ENCODE measurements at regions of chr7 and their contacts with region 1.

Region 1: GRCh38 chr7:44980393-44981034 is 1.7 kb upstream of the MYO1G start:
- DNase-seq: peak; percentile 95
- H3K4me3 Mint-ChIP-seq: peak overlapping the region; percentile 99
- H3K27ac Mint-ChIP-seq: peak overlapping the region; percentile 99
- H3K4me1 Mint-ChIP-seq: peaks cover 58% of the 10 kb centered on the region
- H3K27me3 Mint-ChIP-seq: no peaks in the 10 kb centered on the region

Region 2: GRCh38 chr7:44257618-44258422 is 722.7 kb before region 1 on chr7:
- CTCF ChIA-PET with region 1: no interaction called
- intact Hi-C with region 1: loop called (anchors 5 kb)
- DNase-seq: peak; percentile 90
- H3K4me3 Mint-ChIP-seq: peak overlapping the region; percentile 17
- H3K27ac Mint-ChIP-seq: peak overlapping the region; percentile 94
- H3K4me1 Mint-ChIP-seq: peaks cover 29% of the 10 kb centered on the region
- H3K27me3 Mint-ChIP-seq: no peaks in the 10 kb centered on the region

Region 3: DNA sequence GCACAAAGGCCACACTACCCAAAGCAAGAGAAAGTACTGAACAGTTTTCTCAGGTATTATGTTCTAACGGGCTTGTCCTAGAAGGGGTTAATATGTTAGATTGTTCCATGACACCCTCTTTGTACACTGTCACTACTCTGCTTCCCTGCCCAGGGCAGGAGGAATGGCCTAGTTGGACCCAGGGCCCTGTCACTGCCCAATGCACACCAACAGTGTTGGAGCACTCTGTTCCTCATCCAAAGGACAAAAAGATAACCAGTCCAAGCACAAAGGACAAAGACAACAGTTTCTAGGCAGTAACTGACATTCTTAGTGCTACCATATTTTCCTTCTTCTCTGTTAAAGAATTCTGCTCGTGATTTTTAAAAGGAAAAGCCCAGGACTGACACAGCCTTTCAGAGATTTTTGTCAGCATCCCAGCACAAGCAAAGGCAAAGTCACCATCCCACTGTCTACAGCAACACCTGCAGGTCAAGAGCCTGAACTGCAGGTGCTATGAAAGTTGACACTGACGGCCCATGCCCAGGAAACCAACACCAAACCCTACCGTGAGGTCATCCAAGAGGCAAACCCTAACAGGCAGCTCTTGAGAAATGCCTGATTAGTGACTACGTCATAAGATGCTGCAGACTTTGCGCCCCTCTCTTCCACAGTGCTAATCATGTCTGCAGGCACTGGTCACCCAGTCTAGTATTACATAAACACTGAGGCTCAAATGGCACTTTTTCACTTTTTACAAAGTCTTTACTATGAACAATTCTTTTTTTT is 503.3 kb before region 1 on chr7:
- CTCF ChIA-PET with region 1: no interaction called
- intact Hi-C with region 1: no loop called
- DNase-seq: peak; percentile 70
- H3K4me3 Mint-ChIP-seq: no peak overlapping the region
- H3K27ac Mint-ChIP-seq: no peak overlapping the region
- H3K4me1 Mint-ChIP-seq: peaks cover 33% of the 10 kb centered on the region
- H3K27me3 Mint-ChIP-seq: no peaks in the 10 kb centered on the region

Region 4: DNA sequence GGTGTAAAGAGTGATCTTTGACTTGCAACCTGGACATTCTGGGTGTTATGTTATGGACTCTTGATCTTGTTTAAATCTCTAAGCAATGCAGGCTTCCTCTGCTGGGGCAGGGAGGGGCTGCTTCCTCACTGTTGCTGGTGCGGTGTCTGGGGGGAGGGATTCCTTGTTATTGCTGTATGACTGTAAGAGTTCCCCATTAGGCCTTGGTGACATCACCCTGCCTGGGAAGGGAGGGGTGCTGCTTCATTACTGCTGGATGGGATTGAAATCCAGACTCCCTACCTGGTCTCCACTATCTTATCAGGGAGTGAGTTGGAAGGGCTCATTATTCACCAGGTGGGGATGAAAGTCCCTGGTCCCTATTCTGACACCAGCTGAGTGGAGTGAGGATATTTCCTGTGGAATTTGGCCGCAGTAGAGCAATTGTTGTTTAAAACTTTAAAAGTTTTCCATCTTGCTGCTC is 365.3 kb before region 1 on chr7:
- CTCF ChIA-PET with region 1: no interaction called
- intact Hi-C with region 1: loop called (anchors 1 kb)
- DNase-seq: peak; percentile 57
- H3K4me3 Mint-ChIP-seq: no peak overlapping the region
- H3K27ac Mint-ChIP-seq: peak overlapping the region; percentile 25
- H3K4me1 Mint-ChIP-seq: peaks cover 60% of the 10 kb centered on the region
- H3K27me3 Mint-ChIP-seq: no peaks in the 10 kb centered on the region

Region 5: GRCh38 chr7:44797329-44798251 is 182.9 kb before region 1 on chr7:
- CTCF ChIA-PET with region 1: no interaction called
- intact Hi-C with region 1: loop called (anchors 2 kb)
- DNase-seq: peak; percentile 89
- H3K4me3 Mint-ChIP-seq: peak overlapping the region; percentile 98
- H3K27ac Mint-ChIP-seq: peak overlapping the region; percentile 98
- H3K4me1 Mint-ChIP-seq: peaks cover 30% of the 10 kb centered on the region
- H3K27me3 Mint-ChIP-seq: no peaks in the 10 kb centered on the region

Region 6: DNA sequence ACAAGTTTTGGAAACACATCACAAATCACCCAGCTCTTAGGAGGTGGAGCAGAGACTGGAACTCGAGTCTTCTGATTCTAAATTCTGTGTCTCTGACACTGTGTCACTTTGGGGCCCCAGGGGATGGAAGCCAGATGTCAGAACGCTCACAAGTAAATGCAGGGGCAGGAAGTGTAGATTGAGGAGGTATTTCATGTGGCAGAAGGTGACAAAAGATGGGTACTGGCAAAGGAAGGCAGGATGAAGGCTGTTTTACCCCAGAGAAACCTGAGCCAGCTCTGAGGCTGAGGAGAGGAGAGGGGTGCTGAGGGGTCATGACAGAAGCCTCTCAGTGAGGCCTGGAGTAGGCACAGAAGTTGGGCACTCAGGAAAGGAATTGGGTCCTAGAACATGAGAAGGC is 89.1 kb before region 1 on chr7:
- CTCF ChIA-PET with region 1: no interaction called
- intact Hi-C with region 1: loop called (anchors 1 kb)
- DNase-seq: peak; percentile 83
- H3K4me3 Mint-ChIP-seq: peak overlapping the region; percentile 4
- H3K27ac Mint-ChIP-seq: peak overlapping the region; percentile 93
- H3K4me1 Mint-ChIP-seq: peaks cover 27% of the 10 kb centered on the region
- H3K27me3 Mint-ChIP-seq: no peaks in the 10 kb centered on the region

Region 7: GRCh38 chr7:45026984-45027773 is 46.7 kb after region 1 on chr7:
- CTCF ChIA-PET with region 1: no interaction called
- intact Hi-C with region 1: loop called (anchors 1 kb)
- DNase-seq: peak; percentile 29
- H3K4me3 Mint-ChIP-seq: peak overlapping the region; percentile 65
- H3K27ac Mint-ChIP-seq: peak overlapping the region; percentile 82
- H3K4me1 Mint-ChIP-seq: peaks cover 74% of the 10 kb centered on the region
- H3K27me3 Mint-ChIP-seq: no peaks in the 10 kb centered on the region

Region 8: GRCh38 chr7:45089341-45089891 is 108.9 kb after region 1 on chr7:
- CTCF ChIA-PET with region 1: no interaction called
- intact Hi-C with region 1: no loop called
- DNase-seq: peak; percentile 79
- H3K4me3 Mint-ChIP-seq: peak overlapping the region; percentile 67
- H3K27ac Mint-ChIP-seq: no peak overlapping the region
- H3K4me1 Mint-ChIP-seq: peaks cover 7% of the 10 kb centered on the region
- H3K27me3 Mint-ChIP-seq: peaks cover 12% of the 10 kb centered on the region

Region 9: DNA sequence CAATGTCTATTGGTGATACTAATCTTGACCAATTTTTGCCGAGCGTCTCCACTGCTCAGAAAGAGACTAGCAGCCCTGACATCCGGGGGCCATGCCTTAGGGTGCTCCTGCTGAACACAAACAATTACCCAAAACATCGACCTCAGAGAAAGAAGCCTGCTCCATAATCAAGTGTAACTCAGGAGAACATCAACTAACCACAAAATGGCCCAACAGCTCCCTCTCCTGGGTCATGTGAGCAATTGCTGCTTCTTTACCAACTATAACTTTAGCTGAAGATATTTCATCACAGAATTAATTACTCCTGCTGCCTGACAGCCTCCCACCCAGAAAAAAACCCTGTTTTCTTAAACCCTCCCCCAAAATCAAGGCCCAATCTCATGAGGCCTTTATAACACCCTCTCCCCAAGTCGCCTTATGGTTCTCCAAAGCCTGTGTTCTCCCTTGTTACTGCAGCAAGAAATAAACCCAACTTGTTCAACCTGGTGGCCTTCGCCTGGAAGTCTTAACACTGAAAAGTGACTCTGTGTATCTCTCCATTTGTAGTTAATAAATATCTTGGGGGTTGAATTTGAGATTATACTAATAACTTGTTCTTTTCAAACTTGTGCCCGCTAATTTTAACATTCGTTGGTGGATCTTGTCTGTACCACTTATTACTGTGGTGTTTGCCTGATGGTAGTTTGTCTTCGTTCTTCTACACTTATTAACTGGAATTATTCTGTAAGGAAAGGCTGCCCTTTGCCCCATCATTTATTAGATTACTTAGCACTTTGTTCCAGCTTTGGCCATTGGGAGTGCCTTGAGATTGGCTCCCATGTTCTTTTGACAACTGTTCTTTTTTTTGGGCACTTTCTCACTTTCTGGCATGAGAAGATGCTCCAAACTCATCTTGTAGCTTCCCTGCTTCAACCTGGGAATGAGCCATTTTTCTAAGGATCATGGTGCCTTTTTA is 155.9 kb after region 1 on chr7:
- CTCF ChIA-PET with region 1: interaction called, 5 read pairs
- intact Hi-C with region 1: loop called (anchors 1 kb)
- DNase-seq: peak; percentile 87
- H3K4me3 Mint-ChIP-seq: no peak overlapping the region
- H3K27ac Mint-ChIP-seq: no peak overlapping the region
- H3K4me1 Mint-ChIP-seq: peaks cover 7% of the 10 kb centered on the region
- H3K27me3 Mint-ChIP-seq: no peaks in the 10 kb centered on the region